HepG2 (cell line): ENCODE measurements at regions of chr10 and their contacts with region 1.

Region 1: GRCh38 chr10:99630439-99630838 is 10.2 kb upstream of the SLC25A28 start:
- DNase-seq: peak; percentile 55
- ATAC-seq: peak; percentile 82
- H3K4me3 ChIP-seq: no peak overlapping the region
- H3K27ac ChIP-seq: no peak overlapping the region
- H3K4me1 ChIP-seq: peaks cover 5% of the 10 kb centered on the region; the same call in 1 of the 2 replicates
- H3K27me3 ChIP-seq: no peaks in the 10 kb centered on the region; a peak in 1 of 5 replicates
- CTCF ChIP-seq: peak; percentile 75
- EP300 ChIP-seq: no peak
- POLR2A ChIP-seq: no peak
- RAD21 ChIP-seq: peak; percentile 55; the same call in 1 of the 2 replicates

Region 2: GRCh38 chr10:99682752-99683151 is 52.3 kb after region 1 on chr10:
- CTCF ChIA-PET with region 1: no interaction called
- POLR2A ChIA-PET with region 1: no interaction called
- in situ Hi-C with region 1: loop called (anchors 10 kb)
- intact Hi-C with region 1: loop called (anchors 5 kb)
- DNase-seq: no peak
- ATAC-seq: peak; percentile 92
- H3K4me3 ChIP-seq: no peak overlapping the region
- H3K27ac ChIP-seq: no peak overlapping the region
- H3K4me1 ChIP-seq: no peaks in the 10 kb centered on the region
- H3K27me3 ChIP-seq: no peaks in the 10 kb centered on the region
- CTCF ChIP-seq: peak; percentile 28; the same call in 1 of the 2 replicates
- EP300 ChIP-seq: no peak
- POLR2A ChIP-seq: no peak
- RAD21 ChIP-seq: peak; percentile 30; the same call in 1 of the 2 replicates

Region 3: GRCh38 chr10:99698504-99699080 is 68.2 kb after region 1 on chr10:
- CTCF ChIA-PET with region 1: interaction called, 8 read pairs
- POLR2A ChIA-PET with region 1: no interaction called
- in situ Hi-C with region 1: no loop called
- intact Hi-C with region 1: loop called (anchors 1 kb)
- DNase-seq: no peak
- ATAC-seq: peak; percentile 75
- H3K4me3 ChIP-seq: no peak overlapping the region
- H3K27ac ChIP-seq: no peak overlapping the region
- H3K4me1 ChIP-seq: no peaks in the 10 kb centered on the region
- H3K27me3 ChIP-seq: no peaks in the 10 kb centered on the region
- CTCF ChIP-seq: peak; percentile 51
- EP300 ChIP-seq: no peak
- POLR2A ChIP-seq: no peak
- RAD21 ChIP-seq: no peak; the same call in 1 of the 2 replicates

Region 4: DNA sequence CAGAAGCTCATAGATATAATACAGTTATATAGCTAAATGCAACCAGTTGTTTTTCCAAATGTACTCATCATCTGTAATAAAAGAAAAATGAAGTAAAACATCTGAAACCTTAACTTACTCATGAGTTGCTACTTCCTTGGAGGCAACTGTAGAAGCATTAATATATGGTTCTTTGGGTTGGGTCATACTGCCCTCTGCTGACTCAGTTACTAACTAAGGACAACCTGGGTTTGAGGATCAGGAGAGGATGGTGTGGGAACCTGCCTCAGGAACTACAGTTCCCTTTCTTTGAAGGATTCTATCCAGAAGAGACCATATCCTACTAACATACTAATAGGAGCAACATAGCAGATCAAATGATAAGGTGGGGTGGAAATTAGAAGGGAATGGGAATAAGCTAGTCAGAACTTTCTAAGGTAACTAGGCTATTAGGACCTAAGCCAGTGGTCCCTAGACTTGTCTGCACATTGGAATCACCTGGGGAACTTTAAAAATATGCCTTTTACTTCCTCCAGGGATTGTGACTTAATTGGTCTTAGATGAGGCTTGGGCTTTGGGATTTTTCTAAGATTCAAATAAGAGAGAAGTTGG is 80.8 kb after region 1 on chr10:
- CTCF ChIA-PET with region 1: interaction called, 21 read pairs
- POLR2A ChIA-PET with region 1: no interaction called
- in situ Hi-C with region 1: loop called (anchors 10 kb)
- intact Hi-C with region 1: loop called (anchors 1 kb)
- DNase-seq: peak; percentile 51
- ATAC-seq: peak; percentile 92
- H3K4me3 ChIP-seq: no peak overlapping the region
- H3K27ac ChIP-seq: no peak overlapping the region
- H3K4me1 ChIP-seq: no peaks in the 10 kb centered on the region
- H3K27me3 ChIP-seq: no peaks in the 10 kb centered on the region
- CTCF ChIP-seq: peak; percentile 78
- EP300 ChIP-seq: no peak
- POLR2A ChIP-seq: no peak
- RAD21 ChIP-seq: no peak

Region 5: DNA sequence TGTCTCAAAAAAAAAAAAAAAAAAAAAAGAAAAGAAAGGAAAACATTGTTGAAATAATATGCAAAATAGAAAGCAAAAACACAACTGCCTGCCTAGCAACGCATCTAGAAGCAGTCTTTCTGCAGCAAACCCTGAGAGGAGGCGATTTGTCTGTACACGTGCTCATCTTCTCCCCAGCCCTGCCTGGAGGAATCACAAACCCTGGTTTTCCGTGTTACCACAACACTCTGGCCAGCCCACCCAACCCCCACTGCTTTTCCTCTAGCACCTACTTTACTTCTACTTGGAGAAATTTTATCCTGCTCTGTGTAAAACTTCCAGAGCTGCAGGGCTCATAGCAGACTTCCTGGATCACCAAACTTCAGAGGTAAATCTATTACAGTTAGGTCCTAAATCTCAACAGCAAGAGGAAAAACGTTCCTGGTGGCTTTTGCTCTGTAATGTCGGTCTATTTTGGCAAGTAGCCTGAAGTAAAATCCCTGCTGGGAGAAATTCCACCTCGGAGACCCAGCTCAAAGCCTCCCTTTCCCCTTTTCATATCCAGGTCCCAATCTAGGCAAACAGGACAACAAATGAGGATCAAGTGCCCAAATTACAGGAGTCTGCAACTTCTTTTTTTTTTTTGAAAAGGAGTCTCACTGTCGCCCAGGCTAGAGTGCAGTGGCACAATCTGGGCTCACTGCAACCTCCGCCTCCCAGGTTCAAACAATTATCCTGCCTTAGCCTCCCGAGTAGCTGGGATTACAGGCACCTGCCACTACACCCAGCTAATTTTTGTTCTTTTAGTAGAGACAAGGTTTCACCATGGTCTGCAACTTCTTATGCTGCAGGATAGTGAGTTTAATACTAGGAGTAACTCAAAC is 287.8 kb after region 1 on chr10:
- CTCF ChIA-PET with region 1: no interaction called
- POLR2A ChIA-PET with region 1: no interaction called
- in situ Hi-C with region 1: no loop called
- intact Hi-C with region 1: no loop called
- DNase-seq: no peak
- ATAC-seq: no peak
- H3K4me3 ChIP-seq: no peak overlapping the region
- H3K27ac ChIP-seq: peak overlapping the region; percentile 19
- H3K4me1 ChIP-seq: peaks cover 13% of the 10 kb centered on the region
- H3K27me3 ChIP-seq: no peaks in the 10 kb centered on the region
- CTCF ChIP-seq: no peak
- EP300 ChIP-seq: no peak
- POLR2A ChIP-seq: no peak
- RAD21 ChIP-seq: no peak